ENCODE measurements at regions of chr3 and their contacts with region 1.

Region 1: DNA sequence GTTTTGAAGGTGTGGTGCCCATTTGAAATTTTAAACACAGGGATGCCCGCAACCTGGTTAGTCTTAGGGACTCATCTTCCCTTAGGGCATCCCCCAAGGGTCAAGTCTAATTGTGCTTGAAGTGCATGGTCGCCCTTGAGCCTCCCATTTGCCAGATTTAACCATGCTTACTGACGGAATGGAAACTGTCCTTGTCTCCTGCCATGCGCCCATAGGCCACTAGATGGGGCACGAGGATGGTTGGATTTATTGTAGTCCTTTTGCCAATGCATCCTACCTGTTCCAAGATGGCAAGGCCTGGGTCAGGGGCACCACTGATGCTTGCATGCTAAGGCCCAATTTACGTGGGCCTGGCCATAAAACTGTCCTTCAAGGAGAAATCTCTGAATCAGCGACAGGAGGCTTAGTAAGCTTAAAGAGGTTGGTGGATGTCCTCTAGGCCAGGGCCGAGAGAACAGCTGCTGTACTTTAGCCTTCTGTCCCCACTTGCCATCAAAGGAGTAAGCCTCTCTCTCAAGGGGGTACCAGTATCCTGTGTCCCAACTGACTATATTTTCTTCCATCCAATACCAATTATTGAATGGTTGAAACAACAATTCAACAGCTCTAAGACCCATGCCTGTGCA is 355.4 kb downstream of the OTOL1 start:
- DNase-seq: peak; percentile 64
- ATAC-seq: no peak
- H3K4me3 Mint-ChIP-seq: no peak overlapping the region
- H3K27ac Mint-ChIP-seq: no peak overlapping the region
- H3K4me1 Mint-ChIP-seq: no peaks in the 10 kb centered on the region
- H3K27me3 Mint-ChIP-seq: no peaks in the 10 kb centered on the region

Region 2: GRCh38 chr3:161619351-161619750 is 232.7 kb before region 1 on chr3:
- CTCF ChIA-PET with region 1: no interaction called
- POLR2A ChIA-PET with region 1: no interaction called
- intact Hi-C with region 1: no loop called
- DNase-seq: no peak
- ATAC-seq: no peak
- H3K4me3 Mint-ChIP-seq: no peak overlapping the region
- H3K27ac Mint-ChIP-seq: no peak overlapping the region
- H3K4me1 Mint-ChIP-seq: no peaks in the 10 kb centered on the region
- H3K27me3 Mint-ChIP-seq: no peaks in the 10 kb centered on the region

Region 3: GRCh38 chr3:161905520-161906132 is 53.6 kb after region 1 on chr3:
- CTCF ChIA-PET with region 1: no interaction called
- POLR2A ChIA-PET with region 1: no interaction called
- intact Hi-C with region 1: no loop called
- DNase-seq: no peak
- ATAC-seq: no peak
- H3K4me3 Mint-ChIP-seq: no peak overlapping the region
- H3K27ac Mint-ChIP-seq: no peak overlapping the region
- H3K4me1 Mint-ChIP-seq: no peaks in the 10 kb centered on the region
- H3K27me3 Mint-ChIP-seq: no peaks in the 10 kb centered on the region

Region 4: GRCh38 chr3:162192340-162193029 is 340.4 kb after region 1 on chr3:
- CTCF ChIA-PET with region 1: no interaction called
- POLR2A ChIA-PET with region 1: no interaction called
- intact Hi-C with region 1: loop called in 1 of 2 experiments (anchors 10 kb)
- DNase-seq: no peak
- ATAC-seq: no peak
- H3K4me3 Mint-ChIP-seq: no peak overlapping the region
- H3K27ac Mint-ChIP-seq: no peak overlapping the region
- H3K4me1 Mint-ChIP-seq: no peaks in the 10 kb centered on the region
- H3K27me3 Mint-ChIP-seq: no peaks in the 10 kb centered on the region